ENCODE measurements at regions of chr5 and their contacts with region 1.

Region 1: GRCh38 chr5:176647030-176647866 is at the start of gene TSPAN17:
- DNase-seq: peak; percentile 94 to 97 (median 95)
- H3K4me3 ChIP-seq: peak within 1 kb of the TSS; percentile 73 to 76
- H3K4me3 Mint-ChIP-seq: peak within 1 kb of the TSS; percentile 85 to 94 (median 90)
- H3K27ac ChIP-seq: peak within 1 kb of the TSS; percentile 62
- H3K27ac Mint-ChIP-seq: peak within 1 kb of the TSS; percentile 80 to 95 (median 93)
- H3K4me1 ChIP-seq: peaks cover 50% of the 10 kb centered on the region
- H3K4me1 Mint-ChIP-seq: peaks cover 31 to 69% (median 43%) of the 10 kb centered on the region in 4 donors
- H3K27me3 ChIP-seq: no peaks in the 10 kb centered on the region
- H3K27me3 Mint-ChIP-seq: no peaks in the 10 kb centered on the region
- total RNA-seq, gene TSPAN17: 27.4 to 30.7 TPM

Region 2: DNA sequence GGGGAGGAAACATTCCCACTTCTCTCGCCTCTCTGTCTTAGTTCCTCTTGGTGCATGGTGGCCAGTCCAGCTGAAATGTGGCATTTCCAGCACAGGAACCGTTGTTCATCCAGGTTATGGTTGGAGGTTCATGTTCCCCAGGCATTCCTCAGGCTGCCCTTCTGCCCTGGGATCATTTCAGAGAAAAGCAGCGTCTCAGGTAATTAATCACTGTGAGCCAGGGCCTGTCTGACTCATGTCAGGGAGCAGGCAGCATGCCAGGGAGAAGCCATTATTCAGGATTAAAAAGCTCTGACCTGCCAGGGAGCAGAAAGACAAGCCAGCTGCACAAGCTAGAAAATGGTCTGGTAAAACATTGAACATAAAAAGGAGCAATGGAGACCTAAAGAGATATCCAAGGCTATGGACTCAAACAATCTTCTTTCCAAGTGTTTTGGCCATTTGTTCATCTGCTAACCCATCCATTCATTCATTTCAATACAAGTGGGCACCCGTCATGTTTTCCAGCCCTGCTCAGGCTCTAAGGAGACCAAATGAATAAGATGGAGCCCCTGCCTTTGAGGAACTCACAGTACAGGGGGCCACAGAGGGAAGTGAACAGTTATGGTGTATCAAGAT is 1444.7 kb before region 1 on chr5:
- CTCF ChIA-PET with region 1: no interaction called
- POLR2A ChIA-PET with region 1: no interaction called
- intact Hi-C with region 1: no loop called
- DNase-seq: no peak
- H3K4me3 ChIP-seq: no peak overlapping the region
- H3K4me3 Mint-ChIP-seq: no peak overlapping the region
- H3K27ac ChIP-seq: no peak overlapping the region
- H3K27ac Mint-ChIP-seq: no peak overlapping the region
- H3K4me1 ChIP-seq: no peaks in the 10 kb centered on the region
- H3K4me1 Mint-ChIP-seq: no peaks in the 10 kb centered on the region
- H3K27me3 ChIP-seq: no peaks in the 10 kb centered on the region
- H3K27me3 Mint-ChIP-seq: peaks cover 9 to 12% of the 10 kb centered on the region in 2 donors

Region 3: DNA sequence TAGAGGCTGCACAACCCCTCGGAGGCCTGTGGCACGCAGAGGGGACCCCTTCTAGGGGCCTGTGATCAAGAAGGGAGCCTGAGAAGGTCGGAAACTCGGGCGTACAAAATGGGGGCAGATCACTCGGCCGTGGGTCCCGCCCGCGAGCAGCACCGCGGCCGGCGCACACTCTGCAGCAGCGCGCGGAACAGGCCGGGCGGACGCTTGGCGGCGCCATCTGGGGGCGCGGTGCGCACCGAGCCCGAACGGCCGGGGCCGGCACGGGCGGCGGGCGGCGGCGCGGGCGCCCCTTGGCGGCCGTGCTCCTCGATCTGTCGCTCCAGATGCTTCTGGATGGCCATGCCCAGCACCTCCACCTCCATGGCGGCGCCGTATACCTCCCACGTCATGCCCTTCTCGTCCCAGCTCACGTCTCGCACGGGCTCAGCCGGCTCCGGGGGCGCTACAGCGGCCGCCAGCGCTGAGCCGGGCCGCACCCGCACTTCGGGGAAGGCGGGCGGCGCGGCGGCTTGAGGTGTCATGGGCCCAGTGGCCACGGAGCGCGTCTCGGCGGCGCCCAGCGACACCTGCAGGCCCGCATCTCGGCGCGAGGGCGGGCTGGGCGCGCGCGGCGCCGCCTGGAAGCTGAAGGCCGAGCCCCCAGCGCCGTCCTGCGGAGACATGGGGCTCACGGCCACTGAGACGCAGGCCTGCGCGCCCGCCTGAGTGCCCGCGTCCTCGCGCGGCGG is 50.4 kb before region 1 on chr5:
- CTCF ChIA-PET with region 1: interaction called, 5 read pairs
- POLR2A ChIA-PET with region 1: no interaction called
- intact Hi-C with region 1: loop called (anchors 2 kb)
- DNase-seq: peak; percentile 66 to 75 (median 73)
- H3K4me3 ChIP-seq: peak overlapping the region in 1 of 2 donors; percentile 37
- H3K4me3 Mint-ChIP-seq: peak overlapping the region; percentile 78 to 89 (median 82)
- H3K27ac ChIP-seq: no peak overlapping the region
- H3K27ac Mint-ChIP-seq: peak overlapping the region in 2 of 7 donors; percentile 75 to 77
- H3K4me1 ChIP-seq: peaks cover 6% of the 10 kb centered on the region
- H3K4me1 Mint-ChIP-seq: peaks cover 0 to 9% (median 6%) of the 10 kb centered on the region in 4 donors
- H3K27me3 ChIP-seq: no peaks in the 10 kb centered on the region
- H3K27me3 Mint-ChIP-seq: no peaks in the 10 kb centered on the region

Region 4: GRCh38 chr5:176611435-176611834 is 35.8 kb before region 1 on chr5:
- CTCF ChIA-PET with region 1: no interaction called
- POLR2A ChIA-PET with region 1: no interaction called
- intact Hi-C with region 1: loop called (anchors 1 kb)
- DNase-seq: peak in 4 of 5 donors; percentile 38 to 50 (median 48)
- H3K4me3 ChIP-seq: no peak overlapping the region
- H3K4me3 Mint-ChIP-seq: peak overlapping the region in 5 of 8 donors; percentile 0 to 61 (median 25)
- H3K27ac ChIP-seq: no peak overlapping the region
- H3K27ac Mint-ChIP-seq: no peak overlapping the region
- H3K4me1 ChIP-seq: peaks cover 8% of the 10 kb centered on the region
- H3K4me1 Mint-ChIP-seq: peaks cover 7 to 20% (median 13%) of the 10 kb centered on the region in 4 donors
- H3K27me3 ChIP-seq: no peaks in the 10 kb centered on the region
- H3K27me3 Mint-ChIP-seq: peaks cover 18 to 44% of the 10 kb centered on the region in 2 donors

Region 5: DNA sequence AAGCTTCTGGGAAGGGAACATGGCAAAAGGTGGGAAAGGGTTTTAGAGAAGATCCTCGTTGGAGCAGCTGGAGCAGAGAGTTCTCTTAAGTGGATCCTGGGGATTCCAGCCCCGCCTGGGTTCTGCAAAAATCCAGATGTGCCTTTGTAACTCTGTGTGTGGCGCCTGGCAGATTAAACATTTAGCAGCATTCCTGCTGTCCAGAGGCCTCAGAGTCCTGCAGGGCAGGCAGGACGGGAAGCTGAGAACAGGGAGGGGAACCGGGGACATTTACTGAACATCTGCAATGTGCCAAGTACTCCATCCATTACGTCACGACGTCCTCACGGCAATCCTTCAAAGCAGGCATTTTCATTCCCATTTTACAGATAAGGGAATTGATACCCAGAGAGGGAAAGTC is 10.8 kb before region 1 on chr5:
- CTCF ChIA-PET with region 1: no interaction called
- POLR2A ChIA-PET with region 1: no interaction called
- intact Hi-C with region 1: no loop called
- DNase-seq: no peak
- H3K4me3 ChIP-seq: no peak overlapping the region
- H3K4me3 Mint-ChIP-seq: no peak overlapping the region
- H3K27ac ChIP-seq: no peak overlapping the region
- H3K27ac Mint-ChIP-seq: no peak overlapping the region
- H3K4me1 ChIP-seq: no peaks in the 10 kb centered on the region
- H3K4me1 Mint-ChIP-seq: peaks cover 0 to 5% (median 4%) of the 10 kb centered on the region in 4 donors
- H3K27me3 ChIP-seq: peaks cover 7% of the 10 kb centered on the region
- H3K27me3 Mint-ChIP-seq: peaks cover 27 to 35% of the 10 kb centered on the region in 2 donors

Region 6: GRCh38 chr5:176916337-176916736 is 269.1 kb after region 1 on chr5:
- CTCF ChIA-PET with region 1: no interaction called
- POLR2A ChIA-PET with region 1: no interaction called
- intact Hi-C with region 1: no loop called
- DNase-seq: no peak
- H3K4me3 ChIP-seq: no peak overlapping the region
- H3K4me3 Mint-ChIP-seq: no peak overlapping the region
- H3K27ac ChIP-seq: no peak overlapping the region
- H3K27ac Mint-ChIP-seq: peak overlapping the region in 2 of 7 donors; percentile 5 to 54
- H3K4me1 ChIP-seq: no peaks in the 10 kb centered on the region
- H3K4me1 Mint-ChIP-seq: peaks cover 6 to 20% (median 10%) of the 10 kb centered on the region in 4 donors
- H3K27me3 ChIP-seq: no peaks in the 10 kb centered on the region
- H3K27me3 Mint-ChIP-seq: no peaks in the 10 kb centered on the region